ENCODE measurements at regions of chr4 and their contacts with region 1.

Region 1: GRCh38 chr4:173257732-173258717 is 76.1 kb downstream of the HMGB2 start:
- DNase-seq: no peak
- ATAC-seq: peak; percentile 92
- H3K4me3 ChIP-seq: no peak overlapping the region
- H3K27ac ChIP-seq: no peak overlapping the region
- H3K4me1 ChIP-seq: peaks cover 15% of the 10 kb centered on the region
- H3K27me3 ChIP-seq: no peaks in the 10 kb centered on the region
- CTCF ChIP-seq: peak; percentile 83 to 95 (median 91)
- EP300 ChIP-seq: no peak
- POLR2A ChIP-seq: no peak
- RAD21 ChIP-seq: peak; percentile 96

Region 2: GRCh38 chr4:172850838-172851237 is 407.2 kb before region 1 on chr4:
- CTCF ChIA-PET with region 1: no interaction called
- POLR2A ChIA-PET with region 1: no interaction called
- RAD21 ChIA-PET with region 1: no interaction called
- SMC1A ChIA-PET with region 1: no interaction called
- in situ Hi-C with region 1: no loop called
- intact Hi-C with region 1: no loop called
- DNase-seq: no peak
- ATAC-seq: no peak
- H3K4me3 ChIP-seq: no peak overlapping the region
- H3K27ac ChIP-seq: no peak overlapping the region
- H3K4me1 ChIP-seq: no peaks in the 10 kb centered on the region
- H3K27me3 ChIP-seq: no peaks in the 10 kb centered on the region
- CTCF ChIP-seq: no peak
- EP300 ChIP-seq: no peak
- POLR2A ChIP-seq: no peak
- RAD21 ChIP-seq: no peak

Region 3: GRCh38 chr4:172865531-172866130 is 392.4 kb before region 1 on chr4:
- CTCF ChIA-PET with region 1: no interaction called
- POLR2A ChIA-PET with region 1: no interaction called
- RAD21 ChIA-PET with region 1: no interaction called
- SMC1A ChIA-PET with region 1: no interaction called
- in situ Hi-C with region 1: no loop called
- intact Hi-C with region 1: no loop called
- DNase-seq: no peak
- ATAC-seq: no peak
- H3K4me3 ChIP-seq: no peak overlapping the region
- H3K27ac ChIP-seq: no peak overlapping the region
- H3K4me1 ChIP-seq: no peaks in the 10 kb centered on the region
- H3K27me3 ChIP-seq: no peaks in the 10 kb centered on the region
- CTCF ChIP-seq: no peak
- EP300 ChIP-seq: no peak
- POLR2A ChIP-seq: no peak
- RAD21 ChIP-seq: no peak

Region 4: DNA sequence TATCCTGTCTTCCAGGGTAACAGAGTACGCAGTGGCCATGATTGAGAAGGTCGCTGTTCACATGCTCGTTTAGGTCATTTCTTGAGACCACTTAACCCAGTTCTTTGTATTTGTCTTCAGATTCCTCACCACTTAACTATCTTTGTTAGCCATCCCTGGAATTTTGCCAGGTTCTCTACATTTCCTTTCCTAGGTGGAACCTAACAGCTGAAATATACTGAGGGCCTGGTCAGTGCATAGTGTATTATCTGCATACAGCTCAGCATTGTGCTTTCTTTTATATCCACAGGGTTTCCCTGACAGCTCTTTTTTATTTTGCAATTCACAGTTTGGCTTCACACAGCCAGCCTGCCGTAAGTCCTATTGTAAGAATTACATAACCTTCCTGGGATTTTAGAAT is 238.3 kb before region 1 on chr4:
- CTCF ChIA-PET with region 1: interaction called, 175 read pairs
- POLR2A ChIA-PET with region 1: interaction called, 7 read pairs
- RAD21 ChIA-PET with region 1: interaction called, 98 read pairs
- SMC1A ChIA-PET with region 1: interaction called, 87 read pairs
- in situ Hi-C with region 1: loop called (anchors 5 kb)
- intact Hi-C with region 1: no loop called
- DNase-seq: no peak
- ATAC-seq: no peak
- H3K4me3 ChIP-seq: no peak overlapping the region
- H3K27ac ChIP-seq: no peak overlapping the region
- H3K4me1 ChIP-seq: no peaks in the 10 kb centered on the region
- H3K27me3 ChIP-seq: no peaks in the 10 kb centered on the region; a peak in 1 of 4 replicates
- CTCF ChIP-seq: no peak
- EP300 ChIP-seq: no peak
- POLR2A ChIP-seq: no peak
- RAD21 ChIP-seq: no peak

Region 5: DNA sequence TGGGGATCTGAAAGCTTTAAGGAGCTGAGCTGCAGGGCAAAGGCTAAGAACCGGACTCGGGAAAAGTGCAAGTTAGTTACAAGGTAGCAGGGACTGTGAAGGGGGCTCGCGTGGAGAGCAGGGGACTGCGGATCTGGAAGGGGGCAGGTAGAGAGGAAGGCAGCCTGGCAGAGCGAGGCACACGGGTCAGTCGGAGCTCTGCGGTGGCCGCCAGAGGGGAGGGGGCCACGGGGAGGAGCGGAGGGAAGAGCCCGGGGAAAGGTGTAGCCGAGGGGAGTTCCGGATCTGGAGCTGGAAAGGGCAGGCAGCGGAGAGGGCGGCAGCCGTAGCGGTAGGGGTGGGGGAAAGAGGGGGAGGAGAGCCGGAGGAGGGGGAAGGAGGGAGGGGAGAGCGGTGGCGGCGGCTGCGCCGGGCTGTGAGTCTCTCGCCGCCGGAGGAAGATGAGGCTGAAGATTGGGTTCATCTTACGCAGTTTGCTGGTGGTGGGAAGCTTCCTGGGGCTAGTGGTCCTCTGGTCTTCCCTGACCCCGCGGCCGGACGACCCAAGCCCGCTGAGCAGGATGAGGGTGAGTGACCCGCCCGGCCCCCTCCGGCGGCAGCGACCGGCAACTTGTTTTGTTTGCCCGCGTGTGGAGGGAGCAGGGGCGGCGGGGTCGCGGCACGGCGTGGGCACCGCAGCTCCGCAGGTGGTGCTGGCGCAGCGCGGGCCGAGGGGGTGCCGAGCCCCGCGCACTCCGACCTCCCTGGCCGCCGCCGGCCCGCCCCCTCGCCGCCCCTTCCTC is 89.4 kb before region 1 on chr4 and contains the start of gene GALNT7:
- CTCF ChIA-PET with region 1: interaction called, 30 read pairs
- POLR2A ChIA-PET with region 1: interaction called, 14 read pairs
- RAD21 ChIA-PET with region 1: interaction called, 27 read pairs
- SMC1A ChIA-PET with region 1: interaction called, 18 read pairs
- in situ Hi-C with region 1: no loop called
- intact Hi-C with region 1: loop called (anchors 2 kb)
- DNase-seq: no peak
- ATAC-seq: peak; percentile 62
- H3K4me3 ChIP-seq: peak within 1 kb of the TSS; percentile 99
- H3K27ac ChIP-seq: peak within 1 kb of the TSS; percentile 94
- H3K4me1 ChIP-seq: peaks cover 18% of the 10 kb centered on the region
- H3K27me3 ChIP-seq: no peaks in the 10 kb centered on the region
- CTCF ChIP-seq: no peak
- EP300 ChIP-seq: no peak
- POLR2A ChIP-seq: peak; percentile 66
- RAD21 ChIP-seq: no peak
- polyA plus RNA-seq, gene GALNT7: 14.2 to 14.8 TPM

Region 6: GRCh38 chr4:173230062-173230461 is 28.0 kb before region 1 on chr4:
- CTCF ChIA-PET with region 1: interaction called, 7 read pairs
- POLR2A ChIA-PET with region 1: no interaction called
- RAD21 ChIA-PET with region 1: interaction called, 6 read pairs
- SMC1A ChIA-PET with region 1: interaction called, 13 read pairs
- in situ Hi-C with region 1: no loop called
- intact Hi-C with region 1: no loop called
- DNase-seq: no peak
- ATAC-seq: peak; percentile 46; the same call in 2 of the 3 replicates
- H3K4me3 ChIP-seq: no peak overlapping the region
- H3K27ac ChIP-seq: no peak overlapping the region
- H3K4me1 ChIP-seq: no peaks in the 10 kb centered on the region; the same call in 1 of the 2 replicates
- H3K27me3 ChIP-seq: no peaks in the 10 kb centered on the region
- CTCF ChIP-seq: no peak
- EP300 ChIP-seq: no peak
- POLR2A ChIP-seq: no peak
- RAD21 ChIP-seq: no peak

Region 7: GRCh38 chr4:173270312-173271027 is 12.4 kb after region 1 on chr4:
- CTCF ChIA-PET with region 1: interaction called, 12 read pairs
- POLR2A ChIA-PET with region 1: no interaction called
- RAD21 ChIA-PET with region 1: interaction called, 6 read pairs
- SMC1A ChIA-PET with region 1: interaction called, 17 read pairs
- in situ Hi-C with region 1: no loop called
- intact Hi-C with region 1: no loop called
- DNase-seq: no peak
- ATAC-seq: no peak
- H3K4me3 ChIP-seq: no peak overlapping the region
- H3K27ac ChIP-seq: no peak overlapping the region
- H3K4me1 ChIP-seq: no peaks in the 10 kb centered on the region
- H3K27me3 ChIP-seq: no peaks in the 10 kb centered on the region
- CTCF ChIP-seq: no peak
- EP300 ChIP-seq: no peak
- POLR2A ChIP-seq: no peak
- RAD21 ChIP-seq: no peak

Region 8: GRCh38 chr4:173420324-173420752 is 162.3 kb after region 1 on chr4:
- CTCF ChIA-PET with region 1: interaction called, 12 read pairs
- POLR2A ChIA-PET with region 1: no interaction called
- RAD21 ChIA-PET with region 1: no interaction called
- SMC1A ChIA-PET with region 1: interaction called, 3 read pairs
- in situ Hi-C with region 1: no loop called
- intact Hi-C with region 1: no loop called
- DNase-seq: no peak
- ATAC-seq: peak; percentile 71
- H3K4me3 ChIP-seq: no peak overlapping the region
- H3K27ac ChIP-seq: no peak overlapping the region
- H3K4me1 ChIP-seq: no peaks in the 10 kb centered on the region
- H3K27me3 ChIP-seq: no peaks in the 10 kb centered on the region
- CTCF ChIP-seq: peak; percentile 21 to 48 (median 39); a peak in 2 of 6 replicates
- EP300 ChIP-seq: no peak
- POLR2A ChIP-seq: no peak
- RAD21 ChIP-seq: peak; percentile 57

Region 9: GRCh38 chr4:174349156-174349555 is 1091.1 kb after region 1 on chr4:
- CTCF ChIA-PET with region 1: no interaction called
- POLR2A ChIA-PET with region 1: no interaction called
- RAD21 ChIA-PET with region 1: no interaction called
- SMC1A ChIA-PET with region 1: no interaction called
- in situ Hi-C with region 1: no loop called
- intact Hi-C with region 1: no loop called
- DNase-seq: no peak
- ATAC-seq: no peak
- H3K4me3 ChIP-seq: no peak overlapping the region
- H3K27ac ChIP-seq: no peak overlapping the region
- H3K4me1 ChIP-seq: no peaks in the 10 kb centered on the region
- H3K27me3 ChIP-seq: no peaks in the 10 kb centered on the region
- CTCF ChIP-seq: no peak
- EP300 ChIP-seq: no peak
- POLR2A ChIP-seq: no peak
- RAD21 ChIP-seq: no peak